ENCODE measurements at regions of chr10 and their contacts with region 1.

Region 1: DNA sequence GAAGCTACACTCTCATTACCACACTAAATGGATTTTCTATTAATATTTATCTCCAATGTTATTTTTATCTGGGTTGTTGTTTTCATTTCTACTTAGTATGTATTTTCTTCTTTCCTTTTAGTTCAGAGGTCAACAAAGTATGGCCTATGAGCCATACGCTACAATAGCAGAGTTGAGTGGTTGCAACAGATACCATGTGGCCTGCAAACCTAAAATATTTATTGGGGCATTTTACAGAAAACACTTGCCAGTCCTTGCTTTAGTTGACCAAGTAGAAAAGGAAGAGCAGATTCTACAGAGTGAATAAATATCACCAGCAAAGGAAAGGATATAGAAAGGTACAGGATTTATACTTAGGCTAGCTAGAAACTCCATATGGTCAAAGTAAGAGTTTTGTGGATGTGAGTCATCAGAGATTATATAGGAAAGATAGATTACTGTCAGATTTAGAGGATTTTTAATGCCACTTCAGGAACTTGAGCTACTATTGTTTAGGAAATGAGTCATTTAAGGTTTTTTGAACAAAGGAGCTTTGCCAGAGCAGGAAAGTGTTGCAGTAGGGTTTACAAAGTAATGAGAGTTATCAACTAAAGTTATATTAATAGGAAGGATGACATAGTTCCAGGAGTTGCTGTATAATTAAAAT is 323.3 kb upstream of the KAT6B start:
- DNase-seq: no peak
- ATAC-seq: no peak
- H3K4me3 ChIP-seq: no peak overlapping the region
- H3K27ac ChIP-seq: no peak overlapping the region
- H3K4me1 ChIP-seq: peaks cover 6% of the 10 kb centered on the region
- H3K27me3 ChIP-seq: no peaks in the 10 kb centered on the region
- CTCF ChIP-seq: no peak

Region 2: DNA sequence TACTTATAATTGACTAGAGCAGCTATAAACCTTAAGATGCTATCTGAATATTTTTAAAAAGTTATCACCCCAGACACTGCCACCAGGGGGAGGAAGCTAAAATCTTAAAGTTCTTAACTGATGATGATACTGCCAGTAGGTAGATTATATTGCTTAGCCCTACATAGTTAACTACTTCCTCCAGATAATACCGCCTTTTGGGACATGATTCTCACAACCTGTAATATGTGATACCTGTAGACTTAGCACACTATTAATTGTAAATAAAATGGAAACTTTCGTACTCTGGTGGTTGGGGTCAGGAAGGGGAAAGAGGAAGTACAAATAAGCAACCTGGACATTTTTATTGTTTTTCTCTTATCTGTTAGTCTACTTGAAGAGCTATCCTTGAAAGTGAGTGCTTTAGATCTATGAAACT is 83.1 kb before region 1 on chr10:
- intact Hi-C with region 1: no loop called
- DNase-seq: no peak
- ATAC-seq: no peak
- H3K4me3 ChIP-seq: no peak overlapping the region
- H3K27ac ChIP-seq: no peak overlapping the region
- H3K4me1 ChIP-seq: no peaks in the 10 kb centered on the region
- H3K27me3 ChIP-seq: no peaks in the 10 kb centered on the region
- CTCF ChIP-seq: peak; percentile 29

Region 3: GRCh38 chr10:74432841-74433594 is 70.1 kb before region 1 on chr10:
- intact Hi-C with region 1: loop called in 1 of 2 experiments (anchors 10 kb)
- DNase-seq: no peak
- ATAC-seq: no peak
- H3K4me3 ChIP-seq: no peak overlapping the region
- H3K27ac ChIP-seq: no peak overlapping the region
- H3K4me1 ChIP-seq: no peaks in the 10 kb centered on the region
- H3K27me3 ChIP-seq: no peaks in the 10 kb centered on the region
- CTCF ChIP-seq: no peak

Measured in psoas muscle (tissue), 8 donors.